ENCODE measurements at regions of chr15 and their contacts with region 1.

Region 1: DNA sequence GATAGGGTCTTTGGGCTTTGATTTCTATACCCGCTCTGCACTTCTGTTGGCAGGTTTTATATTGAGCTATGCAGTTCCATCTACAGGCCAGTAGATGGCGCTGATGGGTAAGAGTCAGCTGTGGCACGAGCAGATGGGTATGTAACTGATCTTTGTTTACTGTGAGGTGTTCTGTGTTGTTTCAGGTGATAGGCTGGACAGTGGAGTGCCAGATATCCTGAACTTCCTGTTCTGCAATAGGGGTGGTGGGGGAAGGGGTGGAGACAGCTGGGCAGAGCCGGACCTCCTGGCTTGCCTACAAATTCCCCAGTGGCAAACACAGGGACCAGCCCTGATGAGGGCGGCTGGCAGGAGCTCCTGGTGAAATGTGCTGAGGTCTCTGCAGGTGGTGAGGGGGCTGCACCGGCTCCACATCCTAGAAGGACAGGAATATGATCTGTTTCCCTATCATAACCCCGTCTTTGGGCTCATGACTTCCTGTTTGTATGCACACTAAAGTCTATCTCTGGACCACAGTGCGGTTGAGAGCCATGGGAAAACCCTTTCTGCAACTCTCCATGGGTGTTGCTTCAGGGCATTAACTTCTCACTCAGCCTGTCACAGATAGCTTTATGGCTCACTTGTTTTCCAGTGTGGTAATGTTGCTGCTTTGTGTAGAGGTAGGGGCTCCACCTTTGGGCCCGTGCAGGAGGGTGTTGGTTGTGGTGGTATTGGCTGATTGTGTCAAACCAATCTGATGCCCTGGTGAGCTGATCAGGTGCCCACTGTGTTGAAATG is 13.4 kb upstream of the FAM98B start:
- DNase-seq: no peak

Region 2: DNA sequence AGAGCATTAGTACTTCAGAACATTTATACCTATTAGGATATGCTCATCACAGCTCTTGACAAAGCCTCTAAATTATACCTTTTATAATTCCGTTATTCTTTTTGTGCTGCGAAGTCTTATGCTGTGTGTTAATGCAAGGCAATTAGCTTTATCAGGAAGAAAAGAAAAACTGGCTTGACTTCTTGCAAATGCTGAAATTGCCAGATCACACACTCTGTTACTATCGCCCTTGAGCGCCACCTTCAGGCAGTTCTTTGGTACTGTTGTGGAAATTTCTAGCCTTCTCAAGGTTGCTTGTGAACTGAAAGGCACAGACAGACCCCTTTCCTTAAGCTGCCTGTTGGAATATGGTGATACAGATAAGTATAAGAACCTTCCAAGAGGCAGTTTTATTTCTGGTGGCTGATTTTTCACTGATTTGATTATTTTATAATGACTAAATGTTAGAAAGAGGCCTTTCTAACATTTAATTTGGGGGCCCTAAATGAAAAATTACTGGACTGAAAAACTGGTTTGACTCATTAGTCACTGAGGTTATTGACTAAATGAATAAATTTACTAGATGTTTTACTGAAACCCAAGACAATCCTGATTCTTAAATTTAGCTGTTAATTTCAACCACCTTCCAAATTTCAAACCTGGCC is 250.3 kb after region 1 on chr15:
- intact Hi-C with region 1: loop called (anchors 5 to 10 kb)
- DNase-seq: no peak